ENCODE measurements at regions of chr3 and their contacts with region 1.

Region 1: DNA sequence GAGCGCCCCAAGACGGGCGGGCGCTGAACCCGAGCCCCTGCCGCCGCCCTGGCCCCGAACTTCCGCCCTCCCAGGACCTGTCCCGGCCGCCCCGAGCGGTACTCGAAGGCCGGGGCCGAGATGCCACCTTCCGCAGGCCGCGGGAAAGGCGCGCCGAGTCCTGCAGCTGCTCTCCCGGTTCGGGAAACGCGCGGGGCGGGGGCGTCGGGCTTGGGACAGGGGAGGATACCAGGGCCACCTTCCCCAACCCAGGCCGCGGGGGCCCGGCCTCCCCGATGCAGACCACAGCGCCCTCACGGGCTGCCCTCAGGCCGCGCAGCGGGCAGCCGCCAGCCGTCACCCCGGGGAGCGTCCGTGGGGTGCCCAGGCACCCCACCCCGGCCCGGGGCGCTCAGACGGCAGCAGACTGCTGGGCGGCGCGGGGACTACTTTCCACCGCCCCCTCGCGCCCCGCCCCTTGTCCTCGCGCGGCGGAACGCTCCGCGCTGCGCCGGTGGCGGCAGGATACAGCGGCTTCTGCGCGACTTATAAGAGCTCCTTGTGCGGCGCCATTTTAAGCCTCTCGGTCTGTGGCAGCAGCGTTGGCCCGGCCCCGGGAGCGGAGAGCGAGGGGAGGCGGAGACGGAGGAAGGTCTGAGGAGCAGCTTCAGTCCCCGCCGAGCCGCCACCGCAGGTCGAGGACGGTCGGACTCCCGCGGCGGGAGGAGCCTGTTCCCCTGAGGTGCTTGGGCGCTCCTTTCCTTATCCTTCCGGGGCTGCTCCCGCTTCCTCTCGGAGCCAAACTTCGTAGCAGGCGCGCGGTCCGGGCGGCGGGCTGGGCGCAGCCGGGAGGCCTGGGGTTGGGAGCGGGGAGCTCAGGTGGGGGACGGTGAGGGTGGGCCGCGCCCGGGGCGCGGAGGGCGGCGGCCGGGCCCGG is at the start of gene CTNNB1:
- DNase-seq: peak; percentile 94 to 96
- ATAC-seq: peak; percentile 93 to 97 (median 94)
- H3K4me3 ChIP-seq: peak within 1 kb of the TSS; percentile 97
- H3K27ac ChIP-seq: peak within 1 kb of the TSS; percentile 98
- H3K4me1 ChIP-seq: peaks cover 33% of the 10 kb centered on the region
- H3K27me3 ChIP-seq: no peaks in the 10 kb centered on the region
- CTCF ChIP-seq: peak; percentile 13
- total RNA-seq, gene CTNNB1: 93.8 to 128 (median 113) TPM

Region 2: GRCh38 chr3:40780291-40780924 is 418.8 kb before region 1 on chr3:
- intact Hi-C with region 1: loop called in 1 of 2 experiments (anchors 5 kb)
- DNase-seq: peak; percentile 85
- ATAC-seq: peak; percentile 75 to 91 (median 88)
- H3K4me3 ChIP-seq: peak overlapping the region; percentile 52
- H3K27ac ChIP-seq: peak overlapping the region; percentile 48
- H3K4me1 ChIP-seq: peaks cover 5% of the 10 kb centered on the region
- H3K27me3 ChIP-seq: no peaks in the 10 kb centered on the region
- CTCF ChIP-seq: no peak

Region 3: GRCh38 chr3:40877631-40878463 is 321.4 kb before region 1 on chr3:
- intact Hi-C with region 1: loop called in 1 of 2 experiments (anchors 10 kb)
- DNase-seq: peak; percentile 59 to 65
- ATAC-seq: peak in 3 of 4 donors; percentile 69 to 86 (median 76)
- H3K4me3 ChIP-seq: peak overlapping the region; percentile 2
- H3K27ac ChIP-seq: peak overlapping the region; percentile 53
- H3K4me1 ChIP-seq: peaks cover 4% of the 10 kb centered on the region
- H3K27me3 ChIP-seq: no peaks in the 10 kb centered on the region
- CTCF ChIP-seq: no peak

Region 4: DNA sequence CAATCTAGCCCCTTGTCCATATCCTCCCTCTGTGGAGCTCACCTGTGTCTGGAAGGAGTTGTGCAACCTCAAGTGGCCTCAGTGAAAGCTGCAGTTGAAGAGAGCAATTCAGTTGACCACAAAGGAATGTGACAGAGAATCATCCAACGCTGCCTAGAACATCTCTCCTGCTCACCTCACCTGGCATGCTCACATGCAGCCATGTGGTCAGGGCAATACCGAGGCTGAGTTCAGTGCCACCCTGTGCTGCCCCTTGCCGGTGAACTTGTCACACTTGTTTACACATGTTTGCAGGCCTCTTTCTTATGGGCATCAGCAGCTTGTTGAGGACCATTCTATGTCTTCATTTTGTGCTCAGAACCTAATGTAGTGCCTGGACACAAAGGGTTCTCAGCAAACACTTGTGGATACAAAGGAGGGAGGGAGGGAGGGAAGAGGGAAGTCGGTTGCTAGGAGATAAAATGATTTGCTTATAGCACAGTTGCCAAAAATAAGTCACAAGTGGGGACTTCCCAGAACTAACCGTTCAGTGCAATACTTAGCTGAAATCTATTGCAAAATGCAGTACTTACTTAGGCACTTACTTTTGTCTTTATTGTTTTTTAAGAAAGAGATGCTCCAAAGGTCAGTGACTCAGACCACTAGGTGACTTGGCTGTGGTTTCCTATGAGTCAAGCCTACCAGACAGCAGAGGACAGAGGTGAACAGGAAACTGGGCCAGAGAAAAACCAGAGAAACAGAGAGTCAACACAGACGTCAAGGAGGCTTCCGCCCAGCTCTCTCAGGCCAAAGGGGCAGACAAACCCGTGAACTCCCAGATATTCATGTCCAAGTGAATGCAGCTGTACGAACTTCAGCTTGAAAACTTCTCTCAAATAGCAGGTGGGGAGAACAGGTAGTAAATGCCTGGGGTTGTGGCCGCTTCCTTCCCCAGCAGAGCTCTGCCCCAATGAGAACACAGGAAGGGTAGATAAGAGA is 227.7 kb before region 1 on chr3:
- intact Hi-C with region 1: loop called in 1 of 2 experiments (anchors 10 kb)
- DNase-seq: peak; percentile 68 to 70
- ATAC-seq: peak; percentile 65 to 90 (median 86)
- H3K4me3 ChIP-seq: no peak overlapping the region
- H3K27ac ChIP-seq: peak overlapping the region; percentile 56
- H3K4me1 ChIP-seq: no peaks in the 10 kb centered on the region
- H3K27me3 ChIP-seq: no peaks in the 10 kb centered on the region
- CTCF ChIP-seq: no peak

Measured in psoas muscle (tissue), 8 donors.